Mammary epithelial cell (primary cell): ENCODE measurements at regions of chr7 and their contacts with region 1.

Region 1: GRCh38 chr7:90256778-90257177 is 11.8 kb downstream of the CFAP69 start:
- DNase-seq: no peak
- H3K4me3 ChIP-seq: no peak overlapping the region
- H3K27ac ChIP-seq: no peak overlapping the region
- H3K4me1 ChIP-seq: peaks cover 4% of the 10 kb centered on the region
- H3K27me3 ChIP-seq: no peaks in the 10 kb centered on the region
- CTCF ChIP-seq: no peak

Region 2: GRCh38 chr7:90163534-90163933 is 93.2 kb before region 1 on chr7:
- CTCF ChIA-PET with region 1: no interaction called
- dilution Hi-C with region 1: no loop called
- in situ Hi-C with region 1: loop called (anchors 5 to 25 kb)
- intact Hi-C with region 1: no loop called
- DNase-seq: no peak
- H3K4me3 ChIP-seq: no peak overlapping the region
- H3K27ac ChIP-seq: no peak overlapping the region
- H3K4me1 ChIP-seq: no peaks in the 10 kb centered on the region
- H3K27me3 ChIP-seq: no peaks in the 10 kb centered on the region
- CTCF ChIP-seq: no peak

Region 3: DNA sequence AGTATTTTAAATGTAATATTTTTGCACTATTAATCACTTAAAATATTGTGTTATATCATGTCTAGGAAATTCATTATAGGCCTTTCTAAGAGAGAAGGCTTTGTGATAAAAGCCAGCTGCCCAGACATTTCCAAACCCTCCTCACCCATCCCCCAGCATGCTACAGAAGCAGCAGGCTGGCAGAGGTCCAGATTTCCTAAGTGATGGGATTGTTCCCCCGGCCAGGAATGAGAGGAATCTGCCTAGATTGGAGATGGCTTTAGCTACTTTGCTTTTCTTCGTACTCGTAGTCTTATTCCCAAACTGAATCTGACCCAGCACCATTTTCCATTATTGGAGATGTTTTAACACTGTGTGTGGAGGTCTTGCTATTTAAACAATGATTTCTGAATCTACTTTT is 368.8 kb after region 1 on chr7:
- CTCF ChIA-PET with region 1: no interaction called
- dilution Hi-C with region 1: no loop called
- in situ Hi-C with region 1: no loop called
- intact Hi-C with region 1: no loop called
- DNase-seq: no peak
- H3K4me3 ChIP-seq: no peak overlapping the region
- H3K27ac ChIP-seq: peak overlapping the region; percentile 80
- H3K4me1 ChIP-seq: peaks cover 34% of the 10 kb centered on the region
- H3K27me3 ChIP-seq: no peaks in the 10 kb centered on the region
- CTCF ChIP-seq: no peak